ENCODE measurements at regions of chr17 and their contacts with region 1.

Region 1: DNA sequence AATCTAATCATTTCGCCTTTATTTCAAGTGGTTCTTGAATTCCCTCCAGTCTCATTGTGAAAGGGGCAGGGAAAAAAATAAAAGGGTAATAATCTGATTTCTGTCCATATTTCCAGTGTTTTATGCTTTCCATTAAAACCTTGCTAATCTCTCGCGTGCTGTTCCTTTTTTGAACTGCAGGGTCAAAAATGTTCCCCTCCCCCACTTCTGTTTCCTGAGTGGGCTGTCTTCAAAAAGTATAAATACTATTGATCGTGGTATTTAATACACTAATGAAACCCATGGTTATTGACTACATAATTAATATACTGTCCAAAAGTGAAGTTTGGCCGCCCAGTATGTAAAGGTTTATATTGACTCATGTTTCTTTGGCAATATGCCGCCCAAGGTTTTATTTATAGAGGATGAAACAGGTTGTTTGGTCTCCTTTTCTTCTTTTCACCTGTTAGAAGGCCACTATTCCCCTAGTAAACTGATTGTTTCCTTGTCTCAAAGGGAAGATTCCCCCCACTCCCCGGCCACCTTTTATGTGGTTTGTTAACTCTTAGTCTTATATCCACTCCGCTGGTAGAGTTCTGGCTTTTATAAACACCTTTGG is 69.7 kb downstream of the RPA1 start:
- H3K4me3 ChIP-seq: no peak overlapping the region
- H3K27ac ChIP-seq: no peak overlapping the region
- H3K4me1 ChIP-seq: peaks cover 5% of the 10 kb centered on the region
- CTCF ChIP-seq: no peak

Region 2: DNA sequence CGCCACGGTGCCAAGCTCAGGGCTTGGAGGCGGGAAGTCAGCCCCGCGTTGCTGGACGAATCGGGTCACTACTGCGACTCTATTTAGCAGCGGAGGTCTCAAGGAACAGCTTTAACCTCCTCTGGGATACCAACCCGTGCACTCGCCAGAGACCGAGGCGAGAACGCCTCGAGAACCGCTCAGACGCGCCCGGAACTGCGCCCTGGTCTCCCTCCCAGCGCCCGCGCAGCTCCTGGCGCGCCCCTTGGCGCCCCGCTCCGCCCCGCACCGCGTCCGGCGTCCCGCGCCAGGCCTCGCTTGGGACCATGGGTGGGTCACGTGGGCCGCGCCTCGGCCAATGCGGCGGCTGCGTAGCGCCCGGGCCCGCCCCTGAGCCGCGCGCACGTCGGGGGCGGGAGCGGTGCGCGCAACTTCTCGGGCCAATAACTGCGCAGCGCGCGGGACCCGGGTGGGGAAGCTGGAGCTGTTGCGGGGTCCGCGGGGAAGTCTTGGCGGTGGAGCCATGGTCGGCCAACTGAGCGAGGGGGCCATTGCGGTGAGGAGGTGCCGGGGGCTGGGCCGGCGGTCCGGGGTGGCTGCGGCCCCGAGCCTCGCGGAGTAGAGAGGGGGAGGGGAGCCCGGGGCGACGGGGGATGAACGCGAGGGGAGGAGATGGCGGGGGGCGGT is 69.8 kb before region 1 on chr17 and contains the starts of genes RPA1 and SMYD4:
- CTCF ChIA-PET with region 1: no interaction called
- POLR2A ChIA-PET with region 1: no interaction called
- H3K4me3 ChIP-seq: peak within 1 kb of the TSS; percentile 88
- H3K27ac ChIP-seq: peak within 1 kb of the TSS; percentile 59; the same call in 1 of the 2 replicates
- H3K4me1 ChIP-seq: 0 out of 2 replicates have a peak, but pooled peaks cover 3% of the 10 kb centered on the region
- CTCF ChIP-seq: no peak

Region 3: GRCh38 chr17:1882836-1883235 is 16.7 kb before region 1 on chr17:
- CTCF ChIA-PET with region 1: interaction called, 16 read pairs
- POLR2A ChIA-PET with region 1: no interaction called
- H3K4me3 ChIP-seq: no peak overlapping the region
- H3K27ac ChIP-seq: no peak overlapping the region
- H3K4me1 ChIP-seq: no peaks in the 10 kb centered on the region
- CTCF ChIP-seq: 0 out of 2 replicates have a peak, but pooled peaks have one; percentile 18

Region 4: DNA sequence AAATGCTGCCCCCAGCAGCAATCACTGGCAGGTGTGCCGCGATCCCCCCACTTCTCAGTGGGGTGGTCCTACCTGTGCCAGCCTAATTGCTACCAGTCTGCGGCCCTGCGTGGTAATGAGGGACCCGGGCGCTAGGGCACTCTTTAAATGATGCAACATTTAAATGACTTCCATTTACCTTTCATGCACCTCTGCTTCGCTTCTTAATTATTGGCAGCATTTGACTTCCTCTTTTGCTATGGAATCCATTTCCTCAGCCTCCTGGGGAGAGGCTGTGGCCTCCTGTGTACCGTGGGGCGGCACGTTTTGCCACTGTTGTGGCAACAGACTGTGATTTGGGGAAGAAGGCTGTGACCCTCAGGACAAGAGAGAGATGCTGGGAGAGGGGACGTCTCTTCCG is 16.4 kb after region 1 on chr17:
- CTCF ChIA-PET with region 1: no interaction called
- POLR2A ChIA-PET with region 1: no interaction called
- H3K4me3 ChIP-seq: no peak overlapping the region
- H3K27ac ChIP-seq: no peak overlapping the region
- H3K4me1 ChIP-seq: no peaks in the 10 kb centered on the region
- CTCF ChIP-seq: no peak

Measured in HEK293 (cell line).